Activated CD4-positive, alpha-beta T cell treated with anti-CD3 and anti-CD28 coated beads for 36 hours (primary cell): ENCODE measurements at regions of chrX and their contacts with region 1.

Region 1: GRCh38 chrX:3811331-3812311 is 98.2 kb upstream of the PRKX start:
- DNase-seq: peak; percentile 63
- ATAC-seq: no peak
- H3K4me3 Mint-ChIP-seq: no peak overlapping the region
- H3K27ac Mint-ChIP-seq: no peak overlapping the region
- H3K4me1 Mint-ChIP-seq: peaks cover 5% of the 10 kb centered on the region
- H3K27me3 Mint-ChIP-seq: peaks cover 11% of the 10 kb centered on the region

Region 2: GRCh38 chrX:2538031-2538757 is 1273.4 kb before region 1 on chrX:
- CTCF ChIA-PET with region 1: no interaction called
- POLR2A ChIA-PET with region 1: no interaction called
- intact Hi-C with region 1: no loop called
- DNase-seq: no peak
- ATAC-seq: no peak
- H3K4me3 Mint-ChIP-seq: no peak overlapping the region
- H3K27ac Mint-ChIP-seq: no peak overlapping the region
- H3K4me1 Mint-ChIP-seq: no peaks in the 10 kb centered on the region
- H3K27me3 Mint-ChIP-seq: peaks cover 4% of the 10 kb centered on the region

Region 3: GRCh38 chrX:3037218-3037617 is 774.4 kb before region 1 on chrX:
- CTCF ChIA-PET with region 1: no interaction called
- POLR2A ChIA-PET with region 1: no interaction called
- intact Hi-C with region 1: loop called in 1 of 2 experiments (anchors 5 kb)
- DNase-seq: no peak
- ATAC-seq: no peak
- H3K4me3 Mint-ChIP-seq: no peak overlapping the region
- H3K27ac Mint-ChIP-seq: no peak overlapping the region
- H3K4me1 Mint-ChIP-seq: no peaks in the 10 kb centered on the region
- H3K27me3 Mint-ChIP-seq: no peaks in the 10 kb centered on the region

Region 4: GRCh38 chrX:3651276-3651675 is 160.3 kb before region 1 on chrX:
- CTCF ChIA-PET with region 1: interaction called, 6 read pairs
- POLR2A ChIA-PET with region 1: no interaction called
- intact Hi-C with region 1: loop called (anchors 1 kb)
- DNase-seq: no peak
- ATAC-seq: no peak
- H3K4me3 Mint-ChIP-seq: no peak overlapping the region
- H3K27ac Mint-ChIP-seq: no peak overlapping the region
- H3K4me1 Mint-ChIP-seq: peaks cover 2% of the 10 kb centered on the region
- H3K27me3 Mint-ChIP-seq: no peaks in the 10 kb centered on the region

Region 5: DNA sequence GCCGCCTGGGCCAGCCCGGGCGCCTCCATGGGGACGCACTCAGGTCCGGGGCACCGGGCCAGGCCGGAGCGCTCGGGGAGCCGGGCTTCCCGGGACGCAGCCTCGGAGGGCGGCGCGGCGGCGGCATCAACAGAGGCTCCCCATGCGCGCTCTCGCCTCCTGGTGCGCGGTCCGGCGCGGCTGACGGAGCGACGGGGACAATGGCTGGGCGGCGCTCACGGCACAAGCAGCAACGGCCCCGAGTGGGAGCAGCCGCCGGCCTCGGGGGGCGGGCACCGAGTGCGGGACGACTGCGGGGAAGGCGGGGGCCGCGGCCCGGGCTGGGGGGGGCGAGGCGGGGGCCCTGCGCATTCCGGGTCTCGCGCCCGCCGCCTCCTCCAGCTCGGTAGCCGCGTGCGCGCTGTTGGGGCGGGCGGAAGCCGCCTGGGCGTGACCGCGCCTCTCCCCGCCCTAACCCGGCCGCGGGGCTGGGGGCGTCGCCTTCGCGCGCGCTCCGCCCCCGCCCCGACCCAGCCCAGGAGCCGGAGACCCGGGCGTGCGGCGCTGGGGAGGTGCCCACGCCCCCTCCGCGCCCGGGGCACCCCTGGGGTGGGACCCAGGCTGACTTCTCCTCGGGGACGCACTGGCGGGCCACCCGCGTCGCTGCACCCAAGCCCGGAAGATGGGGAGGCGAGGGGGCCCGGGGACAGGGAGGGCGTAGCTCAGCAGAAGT is 98.2 kb before region 1 on chrX and contains the start of gene PRKX:
- CTCF ChIA-PET with region 1: no interaction called
- POLR2A ChIA-PET with region 1: interaction called, 5 read pairs
- intact Hi-C with region 1: loop called (anchors 1 kb)
- DNase-seq: peak; percentile 77
- ATAC-seq: peak; percentile 85
- H3K4me3 Mint-ChIP-seq: peak within 1 kb of the TSS; percentile 93
- H3K27ac Mint-ChIP-seq: peak within 1 kb of the TSS; percentile 58
- H3K4me1 Mint-ChIP-seq: peaks cover 10% of the 10 kb centered on the region
- H3K27me3 Mint-ChIP-seq: no peaks in the 10 kb centered on the region
- total RNA-seq, gene PRKX: 35.0 to 36.3 TPM